ENCODE measurements at regions of chr15 and their contacts with region 1.

Region 1: DNA sequence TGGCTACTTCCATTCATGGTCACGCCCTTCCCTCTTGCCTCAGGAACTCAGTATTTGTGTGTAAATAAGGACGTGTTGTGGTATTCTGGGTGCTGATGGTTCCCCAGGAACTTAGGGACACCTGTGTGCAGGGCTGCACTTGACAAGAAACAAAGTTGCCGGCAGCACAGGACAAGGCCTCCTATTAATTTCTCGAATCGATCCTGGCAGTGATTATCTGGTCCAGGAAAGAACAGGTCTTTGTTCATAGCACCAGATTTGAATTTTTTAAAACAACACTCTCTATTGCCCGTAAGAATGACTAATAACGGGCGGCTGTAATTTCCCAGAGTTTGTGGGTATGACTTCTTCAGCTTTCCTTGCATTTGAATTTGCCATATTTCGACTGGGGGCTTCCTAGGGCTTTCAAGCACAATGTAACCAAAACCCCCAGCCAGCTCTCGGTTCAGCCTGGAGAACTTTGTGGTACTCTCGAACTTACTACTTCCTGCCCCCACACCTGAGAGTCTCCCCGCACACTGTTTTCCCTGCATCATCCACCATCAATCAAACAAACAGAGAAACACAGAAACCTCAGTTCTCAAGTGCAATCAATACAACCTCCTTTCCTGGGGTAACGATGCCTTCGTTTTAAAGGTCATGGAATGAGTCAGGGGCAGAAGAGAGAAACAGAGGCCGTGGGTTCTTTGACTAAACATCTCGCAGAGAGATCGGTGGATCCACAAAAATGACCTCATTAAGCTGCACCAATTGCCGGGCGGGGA is 241.7 kb upstream of the ICE2 start:
- DNase-seq: peak; percentile 39
- H3K4me3 Mint-ChIP-seq: peak overlapping the region; percentile 28
- H3K27ac Mint-ChIP-seq: peak overlapping the region; percentile 90
- H3K4me1 Mint-ChIP-seq: peaks cover 53% of the 10 kb centered on the region
- H3K27me3 Mint-ChIP-seq: peaks cover 8% of the 10 kb centered on the region

Region 2: GRCh38 chr15:58966698-58967097 is 1754.0 kb before region 1 on chr15:
- intact Hi-C with region 1: no loop called
- DNase-seq: no peak
- H3K4me3 Mint-ChIP-seq: no peak overlapping the region
- H3K27ac Mint-ChIP-seq: no peak overlapping the region
- H3K4me1 Mint-ChIP-seq: peaks cover 2% of the 10 kb centered on the region
- H3K27me3 Mint-ChIP-seq: peaks cover 11% of the 10 kb centered on the region

Region 3: GRCh38 chr15:60397772-60398445 is 322.8 kb before region 1 on chr15 and contains the start of gene ANXA2:
- intact Hi-C with region 1: loop called (anchors 10 kb)
- DNase-seq: peak; percentile 81
- H3K4me3 Mint-ChIP-seq: peak within 1 kb of the TSS; percentile 96
- H3K27ac Mint-ChIP-seq: peak within 1 kb of the TSS; percentile 97
- H3K4me1 Mint-ChIP-seq: peaks cover 63% of the 10 kb centered on the region
- H3K27me3 Mint-ChIP-seq: peaks cover under 1% of the 10 kb centered on the region
- total RNA-seq, gene ANXA2: 262 and 267 TPM in 2 replicates

Region 4: DNA sequence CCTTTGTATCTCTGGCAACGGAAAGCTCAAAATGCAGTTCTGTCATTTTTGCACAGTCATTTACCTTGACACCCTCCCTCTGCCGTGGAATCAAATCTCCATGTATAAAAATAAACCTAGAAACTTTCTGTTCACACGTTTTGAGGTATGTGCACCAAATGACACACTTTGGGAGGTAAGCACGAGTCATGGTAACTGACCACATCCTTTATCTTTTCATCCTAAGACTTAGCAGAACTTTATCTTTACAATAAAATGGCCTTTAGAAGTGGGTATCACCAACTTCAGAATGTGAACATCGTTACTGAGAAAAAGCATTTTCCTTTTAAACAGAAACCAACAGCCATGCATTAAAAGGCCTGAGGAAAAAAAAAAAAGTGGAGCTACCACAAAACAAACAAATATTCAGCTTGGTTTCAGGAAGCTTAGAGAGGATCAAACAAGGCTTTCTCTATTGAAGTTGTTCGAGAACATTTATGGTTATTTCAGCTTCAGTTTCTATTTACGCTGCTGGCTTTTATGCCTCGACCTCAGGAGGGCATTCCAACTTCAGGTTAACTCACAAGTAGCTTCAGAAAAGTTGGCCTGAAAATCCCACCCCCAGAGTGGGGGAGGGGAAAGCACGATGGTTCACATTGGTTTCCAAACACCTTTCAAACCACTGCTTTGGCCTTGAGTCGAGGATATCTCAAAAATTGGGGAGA is 70.7 kb before region 1 on chr15:
- intact Hi-C with region 1: loop called (anchors 1 kb)
- DNase-seq: peak; percentile 20
- H3K4me3 Mint-ChIP-seq: peak overlapping the region; percentile 50
- H3K27ac Mint-ChIP-seq: peak overlapping the region; percentile 71
- H3K4me1 Mint-ChIP-seq: peaks cover 27% of the 10 kb centered on the region
- H3K27me3 Mint-ChIP-seq: peaks cover 22% of the 10 kb centered on the region

Region 5: GRCh38 chr15:60760646-60761504 is 40.2 kb after region 1 on chr15:
- intact Hi-C with region 1: loop called (anchors 5 kb)
- DNase-seq: no peak
- H3K4me3 Mint-ChIP-seq: no peak overlapping the region
- H3K27ac Mint-ChIP-seq: no peak overlapping the region
- H3K4me1 Mint-ChIP-seq: peaks cover 11% of the 10 kb centered on the region
- H3K27me3 Mint-ChIP-seq: peaks cover 32% of the 10 kb centered on the region

Region 6: DNA sequence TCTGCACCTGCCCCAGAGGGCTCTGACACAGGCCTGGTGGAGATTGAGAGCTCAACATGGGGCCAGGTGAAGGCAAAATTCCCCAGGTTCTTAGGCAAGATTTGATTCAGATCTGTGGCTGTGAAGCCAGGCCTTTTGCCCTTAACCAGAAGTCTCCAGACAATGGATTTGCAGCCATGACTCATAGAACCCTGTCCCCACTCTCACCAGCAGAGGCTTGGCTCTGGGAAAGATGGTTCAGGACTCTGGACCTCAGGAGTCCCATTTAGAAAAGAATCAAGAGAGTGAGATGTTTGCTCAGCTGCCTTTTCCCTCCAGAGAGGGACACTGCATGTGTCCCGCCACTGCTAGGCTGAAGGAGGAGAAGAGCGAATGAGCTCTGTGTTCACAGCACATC is 119.6 kb after region 1 on chr15:
- intact Hi-C with region 1: loop called (anchors 2 kb)
- DNase-seq: no peak
- H3K4me3 Mint-ChIP-seq: no peak overlapping the region
- H3K27ac Mint-ChIP-seq: no peak overlapping the region
- H3K4me1 Mint-ChIP-seq: peaks cover 65% of the 10 kb centered on the region
- H3K27me3 Mint-ChIP-seq: peaks cover 57% of the 10 kb centered on the region

Region 7: DNA sequence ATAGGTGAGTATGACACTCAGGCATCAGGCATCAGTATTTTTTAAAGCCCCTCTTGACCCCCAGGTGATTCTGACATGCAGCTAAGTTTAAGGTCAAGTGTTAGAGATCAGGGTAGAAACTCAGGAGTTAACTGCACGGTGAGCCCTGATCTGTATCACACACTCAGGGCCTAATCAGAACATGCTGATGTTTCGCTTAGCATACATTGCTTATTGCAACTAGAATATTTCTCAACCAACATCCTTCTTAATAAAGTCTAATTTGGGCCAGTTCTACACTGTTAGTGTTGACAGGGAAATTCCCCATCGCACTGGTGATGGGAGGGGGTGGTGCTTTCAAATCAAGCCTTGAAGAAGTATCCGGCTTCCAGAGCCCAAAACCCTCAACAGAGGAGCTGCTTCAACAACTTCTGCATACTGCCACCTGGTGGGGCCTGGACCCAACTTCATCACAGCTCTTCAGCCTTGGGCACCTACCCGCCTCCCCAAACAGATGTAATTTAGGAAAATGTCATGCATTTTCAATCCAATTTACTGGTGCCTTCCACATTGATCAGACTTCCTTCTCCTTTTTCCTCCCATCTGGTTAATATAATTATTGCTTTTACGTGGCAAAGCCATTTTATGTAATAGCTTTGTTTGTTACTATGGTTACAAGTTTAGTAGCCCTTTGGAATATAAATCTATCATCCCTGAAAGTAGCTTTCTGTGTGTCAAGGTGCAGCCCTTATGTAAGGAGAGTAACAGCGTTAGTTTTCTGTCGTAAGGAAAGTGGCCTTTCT is 196.2 kb after region 1 on chr15:
- intact Hi-C with region 1: loop called (anchors 5 kb)
- DNase-seq: peak; percentile 69
- H3K4me3 Mint-ChIP-seq: no peak overlapping the region
- H3K27ac Mint-ChIP-seq: no peak overlapping the region
- H3K4me1 Mint-ChIP-seq: peaks cover 16% of the 10 kb centered on the region
- H3K27me3 Mint-ChIP-seq: peaks cover 27% of the 10 kb centered on the region

Measured in activated T-helper 2 cell treated with anti-CD3 and anti-CD28 coated beads, Interferon-gamma antibody, Interleukin-2, Interleukin-4, amounts not matched to agents 10 μg/mL and 5 μg/mL and 100 μg/mL, durations not matched to agents 14 hours and 24 hours and 36 hours (primary cell).